Activated naive CD4-positive, alpha-beta T cell treated with anti-CD3 and anti-CD28 coated beads, Interleukin-2, amount 10 ng/mL, durations not matched to agents 7 days and 5 days (primary cell): ENCODE measurements at regions of chr1 and their contacts with region 1.

Region 1: DNA sequence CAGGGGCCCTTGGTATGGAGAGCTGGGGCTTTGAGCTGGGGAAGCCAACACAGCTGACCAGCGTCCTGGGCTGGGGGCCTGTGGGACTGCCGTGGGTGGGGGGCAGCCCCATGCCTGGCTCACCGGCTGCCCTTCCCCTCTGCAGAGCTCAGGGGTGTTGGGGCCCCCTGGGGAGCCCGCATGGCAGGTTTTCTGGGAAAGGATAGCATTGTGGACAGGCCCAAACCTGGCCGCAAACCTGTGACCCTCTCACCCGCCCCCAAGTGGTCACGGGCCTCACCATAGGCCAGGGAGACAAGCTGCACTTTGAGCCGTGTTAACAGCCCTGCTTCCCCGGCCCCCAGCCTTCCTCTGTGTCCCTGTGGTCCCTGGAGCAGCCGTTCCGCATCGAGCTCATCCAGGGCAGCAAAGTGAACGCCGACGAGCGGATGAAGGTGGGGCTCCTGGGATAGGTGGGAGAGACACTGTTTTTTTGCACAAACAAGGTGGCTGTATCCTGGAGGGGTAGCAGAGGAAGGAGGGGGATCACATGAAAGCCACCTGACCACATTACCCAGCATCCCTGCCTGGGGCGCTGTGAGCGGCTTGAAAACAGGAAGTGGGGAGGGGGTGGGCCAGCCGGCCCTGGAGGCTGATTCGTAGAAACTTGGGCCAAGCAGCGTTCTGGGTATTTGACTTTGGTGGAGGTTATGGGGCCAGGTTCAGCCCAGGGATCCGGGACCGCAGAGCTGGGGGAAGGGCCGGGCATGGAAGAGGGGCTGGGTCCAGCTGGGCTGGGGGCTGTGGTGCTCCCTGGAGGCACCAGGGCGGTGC is 65.9 kb downstream of the PIK3CD start:
- DNase-seq: peak; percentile 97
- H3K4me3 Mint-ChIP-seq: peak overlapping the region; percentile 98
- H3K27ac Mint-ChIP-seq: peak overlapping the region; percentile 95
- H3K4me1 Mint-ChIP-seq: peaks cover 84% of the 10 kb centered on the region
- H3K27me3 Mint-ChIP-seq: peaks cover 6% of the 10 kb centered on the region

Region 2: DNA sequence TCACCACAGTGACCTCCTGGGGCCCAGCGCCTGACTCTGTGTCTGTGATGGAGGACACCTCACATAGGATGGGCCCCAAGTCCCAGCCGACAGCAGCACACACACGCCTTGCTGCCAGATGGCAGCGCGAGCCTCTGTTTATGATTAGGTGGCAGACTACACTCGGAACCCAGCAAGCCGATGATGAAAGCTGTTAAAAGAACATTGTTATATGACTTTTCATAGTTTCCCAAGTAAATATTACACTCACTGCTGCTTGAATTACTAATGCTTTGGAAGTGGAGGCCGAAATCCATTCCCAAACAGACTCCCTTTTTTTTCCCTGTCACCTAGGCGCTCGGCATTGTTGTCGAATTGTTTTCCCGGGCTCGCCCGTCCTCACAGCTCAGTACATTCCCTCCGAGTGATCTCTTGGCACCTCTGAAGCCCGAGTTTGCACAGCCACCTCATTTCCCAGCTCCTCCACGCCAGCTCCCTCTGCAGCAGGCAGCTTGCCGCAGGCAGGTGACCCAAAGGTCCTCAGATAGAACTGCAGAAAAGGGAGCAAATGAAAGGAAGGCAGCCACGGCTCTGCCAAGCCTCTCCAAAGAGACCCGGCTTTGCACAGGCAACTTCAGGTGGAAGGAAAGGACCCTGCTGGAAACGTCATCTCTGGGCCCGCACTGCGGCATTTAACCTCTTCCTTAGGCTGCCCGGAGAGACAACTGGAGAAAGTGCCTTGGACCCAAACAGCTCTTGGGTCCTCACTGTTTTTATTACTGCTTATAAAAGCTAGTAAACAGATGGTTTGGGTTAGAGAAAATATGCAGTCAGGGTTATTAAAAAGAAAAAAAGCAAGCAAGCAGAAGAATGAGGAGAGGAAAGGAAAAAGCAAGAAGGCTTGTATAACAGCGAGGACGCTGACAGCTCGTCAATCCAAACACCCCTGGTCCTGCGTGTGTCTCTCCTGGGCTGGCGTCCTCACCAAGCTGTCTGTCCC is 250.3 kb before region 1 on chr1:
- CTCF ChIA-PET with region 1: no interaction called
- DNase-seq: no peak
- H3K4me3 Mint-ChIP-seq: no peak overlapping the region
- H3K27ac Mint-ChIP-seq: no peak overlapping the region
- H3K4me1 Mint-ChIP-seq: no peaks in the 10 kb centered on the region
- H3K27me3 Mint-ChIP-seq: peaks cover 53% of the 10 kb centered on the region

Region 3: DNA sequence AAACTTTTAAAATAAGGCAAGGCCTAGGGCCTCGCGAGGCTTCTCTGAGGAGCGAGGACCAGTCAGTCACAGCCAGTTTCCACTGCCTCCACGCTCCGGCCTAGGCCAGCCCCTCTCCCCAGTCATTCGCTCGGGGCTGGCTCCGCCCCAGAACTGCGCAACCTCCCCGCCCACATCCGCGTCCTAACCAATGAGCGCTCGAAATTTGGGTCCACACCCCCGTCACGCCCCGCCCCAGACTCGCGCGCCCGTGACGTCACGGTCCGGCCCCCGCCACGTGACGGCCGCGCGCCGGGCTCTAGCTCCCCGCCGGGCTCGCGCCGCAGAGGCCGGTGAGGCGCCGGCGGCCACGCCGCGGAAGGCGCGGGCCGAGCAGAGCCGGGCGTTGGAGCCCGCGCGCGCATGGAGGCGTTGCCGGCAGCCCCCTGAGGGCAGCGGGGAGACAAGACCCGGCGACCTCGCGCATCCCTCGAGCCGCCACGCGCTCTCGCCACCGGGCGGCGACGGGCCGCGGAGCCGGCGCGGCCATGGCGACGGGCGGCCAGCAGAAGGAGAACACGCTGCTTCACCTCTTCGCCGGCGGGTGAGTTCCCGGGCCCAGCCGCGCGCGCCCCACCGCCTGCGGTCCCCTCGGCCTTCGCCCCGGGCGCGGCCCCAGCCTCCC is 178.1 kb before region 1 on chr1 and contains the start of gene SLC25A33:
- CTCF ChIA-PET with region 1: no interaction called
- DNase-seq: peak; percentile 98
- H3K4me3 Mint-ChIP-seq: peak within 1 kb of the TSS; percentile 89
- H3K27ac Mint-ChIP-seq: peak within 1 kb of the TSS; percentile 89
- H3K4me1 Mint-ChIP-seq: peaks cover 41% of the 10 kb centered on the region
- H3K27me3 Mint-ChIP-seq: no peaks in the 10 kb centered on the region

Region 4: DNA sequence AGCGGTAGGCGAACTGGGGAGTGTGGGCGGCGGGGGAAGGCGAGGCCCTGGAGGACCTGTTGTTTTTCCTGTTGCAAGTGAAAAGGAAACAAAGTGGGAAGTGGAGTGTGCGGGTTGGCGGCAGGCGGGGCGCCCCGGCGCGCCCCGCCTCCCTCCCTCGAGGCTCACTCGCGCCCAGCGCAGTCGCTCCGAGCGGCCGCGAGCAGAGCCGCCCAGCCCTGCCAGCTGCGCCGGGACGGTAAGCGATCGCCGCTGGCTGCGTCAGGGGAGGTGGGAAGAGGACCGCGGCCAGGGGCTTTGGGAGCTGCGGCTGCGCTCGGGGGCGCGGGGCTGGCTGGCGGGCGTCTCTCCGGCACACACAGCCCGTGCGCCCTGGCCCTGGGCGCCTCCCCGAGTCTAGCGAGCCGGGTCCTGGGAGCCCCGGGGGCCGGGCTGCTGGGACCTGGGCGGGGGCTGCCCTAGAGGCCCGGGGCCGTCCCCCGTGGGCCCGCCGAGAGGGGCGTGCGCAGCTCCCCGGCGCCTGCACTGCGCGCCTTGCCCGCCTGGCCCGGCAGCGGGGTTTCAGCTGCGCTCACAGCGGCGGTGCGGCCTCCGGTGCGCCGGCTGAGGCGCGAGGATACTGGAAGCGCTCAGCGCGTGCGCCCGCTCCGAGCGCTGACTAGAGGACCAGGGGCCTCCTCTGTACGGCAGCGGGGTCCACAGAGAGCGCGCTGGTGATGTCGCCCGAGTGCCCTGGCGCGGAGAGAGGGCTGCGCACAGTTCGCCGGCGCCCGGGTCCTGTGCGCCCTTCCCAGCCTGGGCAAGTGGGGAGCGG is 65.6 kb before region 1 on chr1 and contains the start of gene PIK3CD:
- CTCF ChIA-PET with region 1: interaction called, 11 read pairs
- DNase-seq: peak; percentile 69
- H3K4me3 Mint-ChIP-seq: peak within 1 kb of the TSS; percentile 98
- H3K27ac Mint-ChIP-seq: peak within 1 kb of the TSS; percentile 99
- H3K4me1 Mint-ChIP-seq: peaks cover 63% of the 10 kb centered on the region
- H3K27me3 Mint-ChIP-seq: peaks cover 4% of the 10 kb centered on the region

Region 5: GRCh38 chr1:9890224-9890731 is 172.9 kb after region 1 on chr1:
- CTCF ChIA-PET with region 1: no interaction called
- DNase-seq: no peak
- H3K4me3 Mint-ChIP-seq: no peak overlapping the region
- H3K27ac Mint-ChIP-seq: no peak overlapping the region
- H3K4me1 Mint-ChIP-seq: peaks cover 16% of the 10 kb centered on the region
- H3K27me3 Mint-ChIP-seq: no peaks in the 10 kb centered on the region

Region 6: GRCh38 chr1:9900142-9901043 is 183.0 kb after region 1 on chr1:
- CTCF ChIA-PET with region 1: no interaction called
- DNase-seq: peak; percentile 23
- H3K4me3 Mint-ChIP-seq: no peak overlapping the region
- H3K27ac Mint-ChIP-seq: peak overlapping the region; percentile 24
- H3K4me1 Mint-ChIP-seq: peaks cover 13% of the 10 kb centered on the region
- H3K27me3 Mint-ChIP-seq: no peaks in the 10 kb centered on the region